CD4-positive, alpha-beta T cell (primary cell): ENCODE measurements at regions of chr1 and their contacts with region 1.

Region 1: GRCh38 chr1:21659099-21659923 is 9.8 kb downstream of the RAP1GAP start:
- DNase-seq: peak; percentile 64 to 92 (median 77)
- ATAC-seq: peak; percentile 97
- H3K4me3 ChIP-seq: no peak overlapping the region
- H3K4me3 Mint-ChIP-seq: peak overlapping the region; percentile 30
- H3K27ac ChIP-seq: no peak overlapping the region
- H3K27ac Mint-ChIP-seq: no peak overlapping the region
- H3K4me1 ChIP-seq: peaks cover 8% of the 10 kb centered on the region
- H3K4me1 Mint-ChIP-seq: peaks cover 6% of the 10 kb centered on the region
- H3K27me3 ChIP-seq: peaks cover 9 to 17% of the 10 kb centered on the region in 2 experiments
- H3K27me3 Mint-ChIP-seq: peaks cover 35% of the 10 kb centered on the region
- CTCF ChIP-seq: peak; percentile 81

Region 2: GRCh38 chr1:21216835-21217811 is 442.2 kb before region 1 on chr1:
- CTCF ChIA-PET with region 1: no interaction called
- POLR2A ChIA-PET with region 1: no interaction called
- intact Hi-C with region 1: loop called (anchors 2 to 5 kb)
- DNase-seq: peak; percentile 48 to 84 (median 61)
- ATAC-seq: peak; percentile 84
- H3K4me3 ChIP-seq: no peak overlapping the region
- H3K4me3 Mint-ChIP-seq: no peak overlapping the region
- H3K27ac ChIP-seq: no peak overlapping the region
- H3K27ac Mint-ChIP-seq: peak overlapping the region; percentile 22
- H3K4me1 ChIP-seq: no peaks in the 10 kb centered on the region
- H3K4me1 Mint-ChIP-seq: peaks cover 5% of the 10 kb centered on the region
- H3K27me3 ChIP-seq: no peaks in the 10 kb centered on the region
- H3K27me3 Mint-ChIP-seq: no peaks in the 10 kb centered on the region
- CTCF ChIP-seq: peak; percentile 83

Region 3: GRCh38 chr1:21232044-21232443 is 427.3 kb before region 1 on chr1:
- CTCF ChIA-PET with region 1: no interaction called
- POLR2A ChIA-PET with region 1: no interaction called
- intact Hi-C with region 1: loop called in 1 of 2 experiments (anchors 1 kb)
- DNase-seq: peak in 8 of 14 experiments; percentile 12 to 74 (median 32)
- ATAC-seq: peak; percentile 58
- H3K4me3 ChIP-seq: no peak overlapping the region
- H3K4me3 Mint-ChIP-seq: no peak overlapping the region
- H3K27ac ChIP-seq: no peak overlapping the region
- H3K27ac Mint-ChIP-seq: no peak overlapping the region
- H3K4me1 ChIP-seq: no peaks in the 10 kb centered on the region
- H3K4me1 Mint-ChIP-seq: no peaks in the 10 kb centered on the region
- H3K27me3 ChIP-seq: no peaks in the 10 kb centered on the region
- H3K27me3 Mint-ChIP-seq: no peaks in the 10 kb centered on the region
- CTCF ChIP-seq: peak; percentile 95

Region 4: GRCh38 chr1:21255278-21255942 is 403.9 kb before region 1 on chr1:
- CTCF ChIA-PET with region 1: no interaction called
- POLR2A ChIA-PET with region 1: no interaction called
- intact Hi-C with region 1: loop called (anchors 1 to 10 kb)
- DNase-seq: peak; percentile 78 to 90 (median 83)
- ATAC-seq: peak; percentile 87
- H3K4me3 ChIP-seq: no peak overlapping the region
- H3K4me3 Mint-ChIP-seq: no peak overlapping the region
- H3K27ac ChIP-seq: no peak overlapping the region
- H3K27ac Mint-ChIP-seq: peak overlapping the region; percentile 19
- H3K4me1 ChIP-seq: peaks cover 28% of the 10 kb centered on the region
- H3K4me1 Mint-ChIP-seq: peaks cover 25% of the 10 kb centered on the region
- H3K27me3 ChIP-seq: no peaks in the 10 kb centered on the region
- H3K27me3 Mint-ChIP-seq: no peaks in the 10 kb centered on the region
- CTCF ChIP-seq: peak; percentile 78

Region 5: DNA sequence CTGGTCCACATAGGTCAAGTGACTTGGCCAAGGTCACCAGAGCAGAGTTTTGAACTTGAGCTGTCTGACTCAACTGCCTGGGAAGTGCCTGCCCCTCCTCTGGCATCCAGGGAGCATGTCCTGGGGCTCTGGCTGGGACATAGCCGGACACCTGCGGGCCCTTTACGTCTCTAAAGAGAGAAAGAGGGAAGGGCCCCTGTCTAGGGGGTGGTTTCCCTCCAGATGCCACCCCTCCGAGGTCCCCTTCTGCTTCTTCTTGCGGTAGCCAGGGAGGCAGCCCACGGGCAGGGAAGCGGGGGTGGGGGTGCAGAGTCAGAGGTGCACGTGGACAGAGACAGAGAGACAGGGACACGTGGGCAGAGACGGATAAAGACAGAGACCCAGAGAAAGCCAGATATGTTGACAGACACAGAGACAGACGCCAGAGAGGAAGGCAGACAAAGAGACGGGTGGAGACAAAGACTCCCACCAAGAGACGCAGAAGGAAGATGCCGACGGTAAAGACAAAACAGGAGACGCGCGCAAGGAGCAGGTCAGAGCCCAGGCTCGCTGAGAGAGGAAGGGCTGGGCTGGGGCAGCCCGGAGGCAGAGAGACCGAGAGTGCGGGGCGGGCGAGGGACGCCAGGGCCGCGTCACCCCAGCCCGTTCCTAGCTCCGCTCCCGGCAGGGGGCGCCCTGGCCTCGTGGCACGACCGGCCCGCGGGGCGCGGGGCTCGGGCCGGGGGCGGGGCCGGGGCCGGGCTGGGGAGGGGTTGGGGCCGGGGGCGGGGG is 150.5 kb before region 1 on chr1:
- CTCF ChIA-PET with region 1: interaction called, 3 read pairs
- POLR2A ChIA-PET with region 1: no interaction called
- intact Hi-C with region 1: loop called in 1 of 2 experiments (anchors 2 kb)
- DNase-seq: peak; percentile 25 to 75 (median 53)
- ATAC-seq: peak; percentile 91
- H3K4me3 ChIP-seq: peak overlapping the region; percentile 3
- H3K4me3 Mint-ChIP-seq: peak overlapping the region; percentile 79
- H3K27ac ChIP-seq: no peak overlapping the region
- H3K27ac Mint-ChIP-seq: no peak overlapping the region
- H3K4me1 ChIP-seq: peaks cover 11% of the 10 kb centered on the region
- H3K4me1 Mint-ChIP-seq: peaks cover 19% of the 10 kb centered on the region
- H3K27me3 ChIP-seq: peaks cover 45 to 48% of the 10 kb centered on the region in 2 experiments
- H3K27me3 Mint-ChIP-seq: peaks cover 69% of the 10 kb centered on the region
- CTCF ChIP-seq: no peak

Region 6: GRCh38 chr1:21963477-21964217 is 304.3 kb after region 1 on chr1:
- CTCF ChIA-PET with region 1: no interaction called
- POLR2A ChIA-PET with region 1: no interaction called
- intact Hi-C with region 1: loop called in 1 of 2 experiments (anchors 5 kb)
- DNase-seq: peak; percentile 70 to 90 (median 82)
- ATAC-seq: peak; percentile 98
- H3K4me3 ChIP-seq: no peak overlapping the region
- H3K4me3 Mint-ChIP-seq: no peak overlapping the region
- H3K27ac ChIP-seq: no peak overlapping the region
- H3K27ac Mint-ChIP-seq: peak overlapping the region; percentile 25
- H3K4me1 ChIP-seq: peaks cover 10% of the 10 kb centered on the region
- H3K4me1 Mint-ChIP-seq: peaks cover 21% of the 10 kb centered on the region
- H3K27me3 ChIP-seq: no peaks in the 10 kb centered on the region
- H3K27me3 Mint-ChIP-seq: peaks cover 2% of the 10 kb centered on the region
- CTCF ChIP-seq: peak; percentile 96